Activated B cell treated with CpG ODN at 0.5 μM for 24 hours (primary cell): ENCODE measurements at regions of chr17 and their contacts with region 1.

Region 1: DNA sequence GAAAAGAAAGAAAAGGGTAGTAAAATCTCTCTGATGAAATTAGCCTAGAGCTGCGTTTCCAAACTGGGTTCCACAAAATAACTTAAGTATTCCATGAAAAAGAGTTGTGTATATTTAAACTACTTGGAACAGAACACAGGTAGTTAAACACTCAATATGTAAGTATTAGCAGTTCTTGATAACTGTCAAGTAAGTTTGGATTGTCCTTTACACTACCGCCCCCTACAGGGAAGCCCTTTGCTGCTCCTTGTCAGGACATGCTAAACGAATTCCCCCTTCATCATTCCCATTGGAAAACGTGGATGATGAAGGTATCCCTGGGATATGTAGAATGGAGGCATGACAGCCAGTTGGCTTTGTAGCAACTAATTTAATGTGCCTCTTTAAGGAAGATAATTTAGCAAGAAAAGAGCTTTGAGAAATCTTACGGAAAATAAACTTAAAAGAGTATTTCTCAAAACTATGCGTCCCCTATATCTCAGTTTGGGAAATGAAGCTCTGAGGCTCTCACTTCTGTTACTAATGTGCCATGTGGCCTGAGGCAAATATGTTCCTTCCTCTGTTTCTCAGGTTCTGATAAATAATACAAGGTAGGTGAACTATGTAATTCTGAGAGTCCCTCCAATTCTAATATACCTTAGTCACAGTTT is 18.8 kb downstream of the NCBP3 start:
- DNase-seq: no peak
- ATAC-seq: peak; percentile 68
- H3K4me3 Mint-ChIP-seq: no peak overlapping the region
- H3K27ac Mint-ChIP-seq: no peak overlapping the region
- H3K4me1 Mint-ChIP-seq: peaks cover 1% of the 10 kb centered on the region
- H3K27me3 Mint-ChIP-seq: no peaks in the 10 kb centered on the region
- CTCF ChIP-seq: no peak

Region 2: DNA sequence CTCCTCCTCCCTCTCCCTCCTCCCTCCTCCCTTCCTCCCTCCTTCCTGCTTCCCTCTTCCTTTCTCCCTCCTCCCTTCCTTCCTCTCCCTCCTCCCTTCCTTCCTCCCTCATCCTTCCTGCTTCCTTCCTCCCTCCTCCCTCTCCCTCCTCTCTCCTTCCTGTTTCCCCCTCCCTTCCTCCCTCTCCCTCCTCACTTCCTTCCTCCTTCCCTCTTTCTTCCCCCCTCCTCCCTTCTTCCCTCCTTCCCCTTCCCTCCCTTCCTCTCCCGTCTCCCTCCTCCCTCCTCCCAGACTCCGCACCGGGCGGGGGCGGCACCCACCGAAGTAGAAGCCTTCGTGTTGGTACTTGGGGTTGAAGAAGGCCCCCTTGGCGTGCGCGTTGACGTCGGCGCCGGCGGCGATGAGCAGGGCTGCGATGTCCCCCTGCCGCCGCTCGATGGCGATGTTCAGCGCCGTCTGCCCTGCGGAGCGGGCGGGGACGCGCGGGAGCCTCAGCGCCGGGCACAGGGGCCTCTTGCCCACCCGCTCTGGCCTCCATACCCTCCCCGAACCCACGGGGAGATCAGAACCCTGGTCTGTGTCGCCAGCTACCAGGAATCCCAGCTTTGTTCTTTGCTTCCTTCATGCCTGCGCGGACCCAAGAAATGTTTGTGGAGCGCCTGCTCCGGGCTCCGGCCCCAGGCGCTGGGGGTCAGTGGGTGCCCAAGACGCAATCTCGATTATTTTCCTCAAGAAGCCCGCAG is 291.8 kb before region 1 on chr17:
- CTCF ChIA-PET with region 1: no interaction called
- POLR2A ChIA-PET with region 1: no interaction called
- intact Hi-C with region 1: loop called (anchors 5 kb)
- DNase-seq: peak; percentile 53
- ATAC-seq: peak; percentile 97
- H3K4me3 Mint-ChIP-seq: peak overlapping the region; percentile 67
- H3K27ac Mint-ChIP-seq: no peak overlapping the region
- H3K4me1 Mint-ChIP-seq: peaks cover 13% of the 10 kb centered on the region
- H3K27me3 Mint-ChIP-seq: no peaks in the 10 kb centered on the region
- CTCF ChIP-seq: no peak

Region 3: DNA sequence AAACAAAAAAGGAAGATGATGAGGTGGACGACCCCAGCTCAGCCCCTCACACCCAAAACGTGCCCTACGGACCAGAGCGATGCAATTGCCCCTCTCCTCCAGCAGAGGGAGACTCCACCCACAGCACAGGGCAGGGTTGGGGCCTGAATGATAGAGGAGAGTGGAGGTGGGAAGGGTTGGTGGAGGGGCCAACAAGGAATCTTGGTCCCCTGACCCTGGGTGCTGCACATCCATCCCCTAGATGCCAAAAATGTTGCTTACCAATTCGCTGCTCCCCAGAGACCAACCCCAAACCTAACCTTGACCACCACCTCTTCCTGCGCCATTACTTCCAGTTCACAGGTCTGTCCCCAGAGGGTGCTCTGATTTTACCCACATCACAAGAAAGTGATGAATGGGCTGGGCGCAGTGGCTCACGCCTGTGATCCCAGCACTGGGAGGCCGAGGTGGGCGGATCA is 144.2 kb before region 1 on chr17:
- CTCF ChIA-PET with region 1: interaction called, 18 read pairs
- POLR2A ChIA-PET with region 1: no interaction called
- intact Hi-C with region 1: loop called (anchors 1 kb)
- DNase-seq: peak; percentile 58
- ATAC-seq: peak; percentile 75
- H3K4me3 Mint-ChIP-seq: peak overlapping the region; percentile 58
- H3K27ac Mint-ChIP-seq: peak overlapping the region; percentile 83
- H3K4me1 Mint-ChIP-seq: peaks cover 46% of the 10 kb centered on the region
- H3K27me3 Mint-ChIP-seq: no peaks in the 10 kb centered on the region
- CTCF ChIP-seq: peak; percentile 72

Region 4: DNA sequence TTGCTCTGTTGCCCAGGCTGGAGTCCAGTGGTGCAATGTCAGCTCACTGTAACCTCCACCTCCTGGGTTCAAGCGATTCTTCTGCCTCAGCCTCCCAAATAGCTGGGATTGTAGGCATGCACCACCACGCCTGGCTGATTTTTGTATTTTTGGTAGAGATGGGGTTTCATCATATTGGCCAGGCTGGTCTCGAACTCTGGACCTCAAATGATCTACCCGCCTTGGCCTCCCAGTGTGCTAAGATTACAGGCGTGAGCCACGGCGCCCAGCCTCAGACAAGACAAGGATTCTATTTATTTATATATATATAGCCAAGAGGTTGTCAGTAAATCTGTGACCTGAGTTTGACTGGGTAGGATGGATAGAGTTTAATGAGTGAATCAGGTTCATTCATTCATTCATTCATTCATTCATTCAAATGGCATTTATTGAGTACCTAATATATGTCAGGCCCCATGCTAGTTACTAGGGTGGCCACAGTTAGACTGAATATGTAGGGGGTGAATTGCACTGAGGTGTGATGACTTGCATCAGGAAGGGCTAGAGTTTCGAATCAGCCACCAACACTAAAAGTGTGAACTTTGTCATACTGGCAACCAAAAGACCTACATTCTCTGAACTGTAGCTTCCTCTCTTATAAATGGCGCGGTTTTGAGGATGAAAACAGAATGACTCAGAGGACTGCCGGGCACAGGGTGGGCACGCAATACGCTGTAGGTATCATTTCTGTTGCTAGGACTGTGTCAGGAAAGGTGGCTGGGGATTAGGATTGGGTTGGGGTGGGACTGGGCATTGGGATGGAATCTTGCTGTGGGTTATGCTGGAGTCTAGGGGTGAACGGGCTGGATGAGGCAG is 64.1 kb before region 1 on chr17:
- CTCF ChIA-PET with region 1: interaction called, 8 read pairs
- POLR2A ChIA-PET with region 1: interaction called, 4 read pairs
- intact Hi-C with region 1: loop called (anchors 1 kb)
- DNase-seq: no peak
- ATAC-seq: peak; percentile 54
- H3K4me3 Mint-ChIP-seq: peak overlapping the region; percentile 59
- H3K27ac Mint-ChIP-seq: peak overlapping the region; percentile 85
- H3K4me1 Mint-ChIP-seq: peaks cover 21% of the 10 kb centered on the region
- H3K27me3 Mint-ChIP-seq: no peaks in the 10 kb centered on the region
- CTCF ChIP-seq: no peak